Activated CD4-positive, alpha-beta T cell treated with anti-CD3 and anti-CD28 coated beads for 36 hours (primary cell): ENCODE measurements at regions of chr3 and their contacts with region 1.

Region 1: GRCh38 chr3:113051302-113051711 is 60.5 kb downstream of the GTPBP8 start:
- DNase-seq: peak; percentile 92
- ATAC-seq: peak; percentile 95
- H3K4me3 Mint-ChIP-seq: no peak overlapping the region
- H3K27ac Mint-ChIP-seq: no peak overlapping the region
- H3K4me1 Mint-ChIP-seq: peaks cover 2% of the 10 kb centered on the region
- H3K27me3 Mint-ChIP-seq: no peaks in the 10 kb centered on the region

Region 2: GRCh38 chr3:112498914-112499711 is 552.2 kb before region 1 on chr3 and contains the start of gene BTLA:
- CTCF ChIA-PET with region 1: no interaction called
- POLR2A ChIA-PET with region 1: no interaction called
- intact Hi-C with region 1: no loop called
- DNase-seq: peak; percentile 58
- ATAC-seq: peak; percentile 70
- H3K4me3 Mint-ChIP-seq: peak within 1 kb of the TSS; percentile 97
- H3K27ac Mint-ChIP-seq: peak within 1 kb of the TSS; percentile 100
- H3K4me1 Mint-ChIP-seq: peaks cover 54% of the 10 kb centered on the region
- H3K27me3 Mint-ChIP-seq: no peaks in the 10 kb centered on the region
- total RNA-seq, gene BTLA: 21.0 to 21.7 TPM

Region 3: GRCh38 chr3:112948346-112948838 is 102.9 kb before region 1 on chr3:
- CTCF ChIA-PET with region 1: no interaction called
- POLR2A ChIA-PET with region 1: no interaction called
- intact Hi-C with region 1: no loop called
- DNase-seq: no peak
- ATAC-seq: no peak
- H3K4me3 Mint-ChIP-seq: no peak overlapping the region
- H3K27ac Mint-ChIP-seq: no peak overlapping the region
- H3K4me1 Mint-ChIP-seq: peaks cover 30% of the 10 kb centered on the region
- H3K27me3 Mint-ChIP-seq: no peaks in the 10 kb centered on the region

Region 4: DNA sequence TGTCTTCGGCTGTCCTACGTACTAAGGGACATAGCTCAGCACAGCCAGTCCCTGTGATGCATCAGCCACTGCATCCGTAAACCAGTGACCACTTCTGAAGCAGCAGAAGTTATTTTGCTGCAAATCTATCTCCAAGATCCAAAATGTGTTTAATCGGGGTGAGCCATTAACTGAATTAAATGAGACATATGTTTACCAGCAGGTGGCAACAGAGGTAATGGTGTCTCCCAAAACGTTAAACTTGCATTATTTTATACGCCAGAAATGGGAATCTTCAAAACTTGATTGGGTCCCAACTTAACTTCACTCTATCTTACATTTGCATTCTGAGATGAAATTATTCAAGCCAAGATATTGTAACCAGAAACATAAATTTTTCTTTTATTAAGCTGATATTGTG is 84.8 kb after region 1 on chr3:
- CTCF ChIA-PET with region 1: no interaction called
- POLR2A ChIA-PET with region 1: no interaction called
- intact Hi-C with region 1: loop called in 1 of 2 experiments (anchors 1 kb)
- DNase-seq: no peak
- ATAC-seq: no peak
- H3K4me3 Mint-ChIP-seq: no peak overlapping the region
- H3K27ac Mint-ChIP-seq: no peak overlapping the region
- H3K4me1 Mint-ChIP-seq: peaks cover 2% of the 10 kb centered on the region
- H3K27me3 Mint-ChIP-seq: no peaks in the 10 kb centered on the region